H1 (cell line): ENCODE measurements at regions of chr11 and their contacts with region 1.

Region 1: GRCh38 chr11:107741044-107741823 is 29.4 kb upstream of the SLN start:
- DNase-seq: peak in 1 of 2 experiments; percentile 54
- H3K4me3 ChIP-seq: no peak overlapping the region
- H3K27ac ChIP-seq: no peak overlapping the region
- H3K4me1 ChIP-seq: peaks cover 0 to 3% (median 0%) of the 10 kb centered on the region in 4 experiments; a peak in 2 of 7 replicates
- H3K27me3 ChIP-seq: no peaks in the 10 kb centered on the region
- CTCF ChIP-seq: peak in 2 of 3 experiments; percentile 63 to 86; a peak in 3 of 4 replicates
- EP300 ChIP-seq: no peak
- POLR2A ChIP-seq: no peak
- RAD21 ChIP-seq: peak; percentile 64 to 75

Region 2: GRCh38 chr11:107565219-107565937 is 175.9 kb before region 1 on chr11 and contains the start of gene ALKBH8:
- CTCF ChIA-PET with region 1: interaction called, 10 read pairs
- POLR2A ChIA-PET with region 1: no interaction called
- DNase-seq: peak in 1 of 2 experiments; percentile 81
- H3K4me3 ChIP-seq: peak within 1 kb of the TSS; percentile 88 to 99 (median 94)
- H3K27ac ChIP-seq: peak within 1 kb of the TSS; percentile 82
- H3K4me1 ChIP-seq: peaks cover 0 to 6% (median 1%) of the 10 kb centered on the region in 4 experiments; a peak in 3 of 7 replicates
- H3K27me3 ChIP-seq: no peaks in the 10 kb centered on the region
- CTCF ChIP-seq: no peak
- EP300 ChIP-seq: no peak
- POLR2A ChIP-seq: peak in 1 of 2 experiments; percentile 84; a peak in 2 of 3 replicates
- RAD21 ChIP-seq: no peak
- total RNA-seq, gene ALKBH8: 11.9 and 13.0 TPM in 2 replicates

Region 3: DNA sequence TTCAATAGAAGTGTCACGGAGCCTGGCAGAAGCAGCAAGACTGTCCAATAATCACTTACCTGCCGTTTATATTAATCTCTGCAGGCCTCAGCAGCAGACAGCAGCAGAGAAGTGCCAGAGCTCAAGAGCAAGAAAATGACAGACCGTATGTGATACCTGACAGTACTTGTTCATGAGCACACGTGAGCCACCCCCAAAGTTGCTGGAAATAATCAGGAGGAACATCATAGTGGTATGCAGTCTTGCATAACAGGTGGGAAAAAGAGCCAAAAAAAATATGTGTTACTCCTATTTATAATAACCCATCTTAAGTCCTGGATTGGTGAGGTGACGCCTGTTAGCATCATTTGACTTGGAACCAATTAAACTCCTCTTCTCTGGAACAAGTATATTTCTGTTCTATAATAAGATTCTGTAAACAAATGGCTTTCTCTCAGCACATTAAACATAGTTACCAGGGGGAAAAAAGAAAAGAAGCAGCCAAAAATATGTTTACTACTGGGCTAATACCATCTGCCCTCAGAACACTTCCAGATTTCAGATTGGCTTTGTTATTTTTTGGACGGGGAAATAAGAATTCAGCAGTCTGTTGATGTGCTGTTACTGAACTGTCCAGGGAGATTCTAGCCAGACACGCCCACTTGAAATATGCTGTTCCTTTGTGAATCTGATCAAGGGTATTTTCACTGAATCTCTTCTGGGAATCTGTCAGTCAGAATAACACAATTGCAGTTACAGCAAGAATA is 21.5 kb before region 1 on chr11:
- CTCF ChIA-PET with region 1: interaction called, 28 read pairs
- POLR2A ChIA-PET with region 1: no interaction called
- DNase-seq: no peak
- H3K4me3 ChIP-seq: no peak overlapping the region
- H3K27ac ChIP-seq: no peak overlapping the region
- H3K4me1 ChIP-seq: no peaks in the 10 kb centered on the region
- H3K27me3 ChIP-seq: no peaks in the 10 kb centered on the region
- CTCF ChIP-seq: no peak
- EP300 ChIP-seq: no peak
- POLR2A ChIP-seq: no peak
- RAD21 ChIP-seq: no peak

Region 4: DNA sequence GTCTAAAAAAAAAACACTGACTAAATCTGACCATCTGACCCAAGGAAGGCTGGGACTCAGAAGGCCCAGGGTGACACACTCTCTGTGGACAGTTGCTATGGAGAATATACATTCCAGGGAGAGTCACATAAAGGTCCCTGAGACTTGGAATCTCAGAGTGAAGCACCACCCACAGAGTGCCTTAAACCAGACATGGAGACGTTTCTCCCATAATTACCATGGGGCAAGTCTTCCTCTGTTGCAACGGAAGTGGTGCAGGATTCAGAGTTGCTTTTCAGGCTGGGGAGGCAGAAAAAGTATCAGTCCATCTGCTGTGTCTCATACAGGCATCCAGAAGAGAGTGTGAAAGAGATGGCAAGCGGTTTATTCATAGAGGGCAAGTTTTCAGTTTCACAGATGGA is 29.3 kb after region 1 on chr11:
- CTCF ChIA-PET with region 1: interaction called, 88 read pairs
- POLR2A ChIA-PET with region 1: interaction called, 3 read pairs
- DNase-seq: peak in 1 of 2 experiments; percentile 29
- H3K4me3 ChIP-seq: no peak overlapping the region
- H3K27ac ChIP-seq: no peak overlapping the region
- H3K4me1 ChIP-seq: no peaks in the 10 kb centered on the region
- H3K27me3 ChIP-seq: no peaks in the 10 kb centered on the region
- CTCF ChIP-seq: no peak
- EP300 ChIP-seq: no peak
- POLR2A ChIP-seq: no peak
- RAD21 ChIP-seq: no peak

Region 5: GRCh38 chr11:107898270-107898669 is 157.0 kb after region 1 on chr11:
- CTCF ChIA-PET with region 1: interaction called, 21 read pairs
- POLR2A ChIA-PET with region 1: no interaction called
- DNase-seq: no peak
- H3K4me3 ChIP-seq: no peak overlapping the region
- H3K27ac ChIP-seq: no peak overlapping the region
- H3K4me1 ChIP-seq: no peaks in the 10 kb centered on the region
- H3K27me3 ChIP-seq: no peaks in the 10 kb centered on the region
- CTCF ChIP-seq: peak in 2 of 3 experiments; percentile 61 to 65; a peak in 3 of 4 replicates
- EP300 ChIP-seq: no peak
- POLR2A ChIP-seq: no peak
- RAD21 ChIP-seq: peak; percentile 73 to 82

Region 6: DNA sequence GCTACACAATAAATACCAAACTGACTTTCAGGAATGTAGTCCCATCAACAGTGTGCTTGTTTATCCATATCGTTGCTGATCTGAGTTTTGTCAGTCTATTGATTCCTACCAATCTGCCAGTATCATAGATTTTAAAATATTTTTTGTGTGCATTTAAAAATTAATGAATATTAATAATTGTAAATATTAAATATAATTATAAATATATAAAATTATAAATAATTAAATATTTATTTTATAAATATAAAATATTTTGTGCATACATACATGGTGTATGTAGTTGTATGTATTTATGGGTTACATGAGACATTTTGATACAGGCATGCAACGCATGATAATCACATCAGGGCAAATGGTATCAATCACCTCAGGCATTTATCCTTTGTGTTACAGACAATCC is 321.1 kb after region 1 on chr11:
- CTCF ChIA-PET with region 1: no interaction called
- POLR2A ChIA-PET with region 1: no interaction called
- DNase-seq: no peak
- H3K4me3 ChIP-seq: no peak overlapping the region
- H3K27ac ChIP-seq: no peak overlapping the region
- H3K4me1 ChIP-seq: no peaks in the 10 kb centered on the region
- H3K27me3 ChIP-seq: no peaks in the 10 kb centered on the region
- CTCF ChIP-seq: no peak
- EP300 ChIP-seq: no peak
- POLR2A ChIP-seq: no peak
- RAD21 ChIP-seq: no peak